ENCODE measurements at regions of chr1 and their contacts with region 1.

Region 1: GRCh38 chr1:15492596-15492995 is 16.7 kb downstream of the CELA2B start:
- DNase-seq: no peak

Region 2: DNA sequence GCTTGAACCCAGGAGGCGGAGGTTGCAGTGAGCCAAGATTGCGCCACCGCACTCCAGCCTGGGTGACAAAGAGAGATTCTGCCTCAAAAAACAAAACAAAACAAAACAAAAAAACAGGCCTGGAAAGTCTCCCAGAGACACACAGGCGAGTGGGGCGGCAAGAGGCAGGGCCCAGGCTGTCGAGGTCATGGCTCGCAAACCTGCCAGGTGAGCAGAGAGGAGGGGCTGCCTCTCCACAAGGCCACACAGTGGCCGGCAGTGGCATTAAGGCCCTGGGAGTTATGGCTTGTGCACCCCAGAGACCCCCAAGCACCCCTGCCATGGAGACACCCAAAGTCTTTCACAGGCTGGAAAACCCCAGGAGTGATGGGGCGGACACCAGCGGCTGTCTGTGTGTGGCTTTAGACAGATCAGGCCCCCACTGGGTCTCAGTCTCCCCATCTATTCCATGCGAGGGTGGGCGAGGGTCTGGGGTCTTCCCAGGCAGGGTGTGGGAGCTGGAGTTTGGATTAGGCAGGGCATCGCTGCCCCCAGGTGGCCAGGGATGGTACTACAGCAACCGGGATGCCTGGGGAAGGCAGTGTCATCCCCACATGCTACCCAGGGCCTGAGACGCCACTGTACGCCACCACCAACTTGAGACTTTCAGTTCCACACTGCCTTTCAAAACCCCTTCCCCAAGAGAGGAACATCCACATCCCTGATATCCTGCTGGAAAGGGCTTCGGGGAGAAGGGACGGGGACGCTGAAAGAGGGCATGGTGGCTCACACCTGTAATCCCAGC is 61.6 kb before region 1 on chr1:
- in situ Hi-C with region 1: loop called (anchors 10 kb)
- DNase-seq: peak; percentile 62

Region 3: GRCh38 chr1:15526490-15527339 is 34.1 kb after region 1 on chr1 and contains the start of gene DNAJC16:
- in situ Hi-C with region 1: no loop called
- DNase-seq: peak; percentile 100
- total RNA-seq, gene DNAJC16: 3.4 and 19.1 TPM in 2 replicates